RWPE1 (cell line): ENCODE measurements at regions of chr14 and their contacts with region 1.

Region 1: DNA sequence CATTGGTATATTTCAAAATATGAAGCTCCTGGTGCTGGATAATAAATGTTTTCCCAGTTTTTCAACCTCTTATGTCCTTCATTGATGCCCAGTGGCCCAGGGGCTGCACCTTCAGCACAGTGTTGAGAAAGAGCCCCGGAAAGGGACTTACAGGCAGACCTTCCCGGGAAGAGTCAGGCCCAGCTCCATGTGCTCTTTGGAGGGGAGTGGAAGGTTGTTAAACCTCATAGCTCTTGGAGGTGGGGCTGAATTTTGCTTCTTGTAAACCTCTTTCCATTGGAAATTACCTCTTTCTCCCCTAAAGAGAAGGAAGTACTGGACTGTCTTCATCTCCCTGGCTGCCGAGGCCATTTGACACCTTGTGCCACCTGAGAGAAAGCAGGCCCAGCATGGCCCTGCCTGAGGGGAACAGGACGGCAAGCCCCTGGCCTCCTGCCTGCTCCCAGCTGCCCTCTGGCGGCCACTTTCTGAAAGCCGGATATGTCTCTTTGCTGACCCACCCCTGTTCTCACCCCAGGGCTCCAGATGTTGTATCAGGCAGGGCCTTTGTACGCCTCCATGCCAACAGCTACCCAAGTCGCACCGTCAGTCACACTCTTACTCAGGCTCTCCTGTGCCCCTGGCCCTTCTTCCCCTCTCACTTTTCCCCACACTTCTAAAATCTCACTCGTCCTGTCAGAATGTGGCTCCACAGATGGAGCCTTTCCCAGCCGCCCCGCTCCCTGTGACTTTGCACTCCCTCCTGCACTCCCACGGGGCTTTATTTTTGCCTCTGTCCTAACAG is 43.0 kb downstream of the EVL start:
- DNase-seq: peak; percentile 87
- H3K27ac ChIP-seq: peak overlapping the region; percentile 80
- CTCF ChIP-seq: peak; percentile 80

Region 2: DNA sequence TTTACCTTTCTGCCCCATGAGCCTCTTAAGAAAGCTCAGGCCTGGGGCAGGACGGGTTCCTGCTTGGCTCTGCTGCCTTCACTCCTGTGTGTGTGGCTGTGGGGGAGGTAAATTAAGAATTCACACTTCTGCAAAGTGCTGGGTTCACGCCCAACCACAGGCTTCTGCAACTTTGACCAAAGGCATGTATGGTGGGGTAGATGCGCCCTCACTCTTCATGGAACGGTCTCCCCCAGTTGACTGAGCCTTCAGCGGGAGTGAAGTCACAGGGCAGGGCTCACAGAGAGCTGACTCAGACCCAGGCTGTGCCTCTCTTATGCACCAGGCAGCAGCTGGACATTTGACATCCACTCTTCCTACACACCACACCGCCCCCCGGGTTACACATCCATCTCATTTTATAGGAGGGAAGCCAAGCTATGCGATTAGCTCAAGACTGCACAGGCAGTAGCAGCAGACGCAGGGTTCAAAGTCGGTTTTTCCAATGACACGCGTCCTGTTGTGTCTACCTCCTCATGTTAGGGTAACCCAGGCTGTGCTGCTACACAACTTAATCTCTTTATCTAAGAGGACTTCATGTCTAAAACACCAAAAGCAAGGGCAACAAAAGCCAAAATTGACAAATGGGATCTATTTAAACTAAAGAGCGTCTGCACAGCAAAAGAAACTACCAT is 820.8 kb before region 1 on chr14:
- CTCF ChIA-PET with region 1: no interaction called
- POLR2A ChIA-PET with region 1: no interaction called
- DNase-seq: no peak
- H3K27ac ChIP-seq: no peak overlapping the region
- CTCF ChIP-seq: no peak

Region 3: GRCh38 chr14:99982537-99983250 is 125.5 kb before region 1 on chr14:
- CTCF ChIA-PET with region 1: interaction called, 11 read pairs
- POLR2A ChIA-PET with region 1: no interaction called
- DNase-seq: peak; percentile 72
- H3K27ac ChIP-seq: no peak overlapping the region
- CTCF ChIP-seq: peak; percentile 89

Region 4: GRCh38 chr14:100020629-100021028 is 87.6 kb before region 1 on chr14:
- CTCF ChIA-PET with region 1: no interaction called
- POLR2A ChIA-PET with region 1: no interaction called
- DNase-seq: no peak
- H3K27ac ChIP-seq: no peak overlapping the region
- CTCF ChIP-seq: no peak

Region 5: GRCh38 chr14:100072783-100073346 is 35.4 kb before region 1 on chr14:
- CTCF ChIA-PET with region 1: interaction called, 10 read pairs
- POLR2A ChIA-PET with region 1: no interaction called
- DNase-seq: no peak
- H3K27ac ChIP-seq: no peak overlapping the region
- CTCF ChIP-seq: no peak

Region 6: GRCh38 chr14:100096570-100096971 is 11.7 kb before region 1 on chr14:
- CTCF ChIA-PET with region 1: interaction called, 14 read pairs
- POLR2A ChIA-PET with region 1: no interaction called
- DNase-seq: peak; percentile 48
- H3K27ac ChIP-seq: no peak overlapping the region
- CTCF ChIP-seq: no peak

Region 7: GRCh38 chr14:100122481-100123222 is 14.4 kb after region 1 on chr14:
- CTCF ChIA-PET with region 1: interaction called, 10 read pairs
- POLR2A ChIA-PET with region 1: interaction called, 14 read pairs
- DNase-seq: no peak
- H3K27ac ChIP-seq: no peak overlapping the region
- CTCF ChIP-seq: no peak

Region 8: GRCh38 chr14:100134586-100134985 is 26.4 kb after region 1 on chr14:
- CTCF ChIA-PET with region 1: no interaction called
- POLR2A ChIA-PET with region 1: no interaction called
- DNase-seq: no peak
- H3K27ac ChIP-seq: no peak overlapping the region
- CTCF ChIP-seq: no peak

Region 9: GRCh38 chr14:100155042-100155846 is 47.0 kb after region 1 on chr14:
- CTCF ChIA-PET with region 1: interaction called, 13 read pairs
- POLR2A ChIA-PET with region 1: no interaction called
- DNase-seq: peak; percentile 42
- H3K27ac ChIP-seq: peak overlapping the region; percentile 35; the same call in 1 of the 2 replicates
- CTCF ChIP-seq: peak; percentile 47